ENCODE measurements at regions of chr19 and their contacts with region 1.

Region 1: DNA sequence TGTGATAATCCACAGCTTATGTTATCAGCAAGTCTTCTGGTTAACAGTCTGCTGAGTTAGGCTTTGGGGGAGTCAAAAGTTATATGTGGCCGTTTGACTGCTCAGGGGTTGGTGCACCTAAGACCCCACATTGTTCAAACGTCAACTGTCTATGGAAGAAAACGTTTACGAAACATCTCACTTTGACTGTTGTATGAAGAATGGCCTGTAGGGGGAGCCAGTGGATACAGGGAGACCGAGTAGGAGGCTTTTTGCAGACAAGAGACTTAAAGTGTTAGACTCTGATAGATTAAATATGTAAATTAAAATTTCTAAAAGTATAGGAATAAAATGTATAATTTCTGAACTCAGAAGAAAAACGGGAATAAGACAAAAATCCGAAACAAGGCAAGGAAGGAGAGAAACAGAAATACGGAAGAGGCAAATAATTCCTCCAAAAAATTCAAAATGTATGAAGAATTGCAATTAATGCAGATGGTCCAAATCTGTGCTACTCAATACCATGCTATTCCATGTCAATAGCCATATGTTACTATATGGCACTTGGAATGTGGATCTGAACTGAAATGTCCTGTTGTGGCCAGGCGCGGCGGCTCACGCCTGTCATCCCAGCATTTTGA is 37.8 kb downstream of the TNFSF14 start:
- DNase-seq: peak; percentile 76
- H3K4me3 ChIP-seq: no peak overlapping the region
- H3K27ac ChIP-seq: no peak overlapping the region
- H3K4me1 ChIP-seq: no peaks in the 10 kb centered on the region
- H3K27me3 ChIP-seq: no peaks in the 10 kb centered on the region
- CTCF ChIP-seq: peak; percentile 55 to 82 (median 80)
- POLR2A ChIP-seq: no peak

Region 2: DNA sequence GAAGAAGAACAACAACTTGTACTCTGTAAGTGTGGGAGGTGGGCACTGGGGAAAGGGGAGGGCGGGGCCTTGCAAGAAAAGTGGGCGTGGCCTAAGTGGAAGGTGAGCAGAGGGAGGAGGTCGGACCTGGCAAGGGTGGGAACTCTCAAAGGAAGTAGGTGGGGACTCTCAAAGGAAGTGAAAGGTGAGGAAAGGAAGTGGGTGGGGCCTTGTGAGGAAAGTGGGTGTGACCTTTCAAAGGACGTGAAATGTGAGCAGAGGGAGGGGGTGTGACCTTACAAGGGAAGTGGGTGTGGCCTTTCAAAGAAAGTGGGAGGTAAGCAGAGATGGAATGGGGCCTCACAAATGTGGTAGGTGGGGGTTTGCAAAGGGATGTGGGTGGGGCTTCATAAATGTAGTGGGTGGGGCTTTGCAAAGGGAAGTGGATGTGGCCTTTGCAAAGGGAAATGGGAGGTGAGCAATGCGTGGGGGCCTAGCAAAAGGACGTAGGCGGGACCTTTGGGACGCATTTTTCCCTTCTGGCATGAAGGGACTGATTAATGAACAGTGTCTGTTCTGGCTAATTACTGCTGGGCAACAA is 470.8 kb before region 1 on chr19:
- intact Hi-C with region 1: no loop called
- DNase-seq: no peak
- H3K4me3 ChIP-seq: no peak overlapping the region
- H3K27ac ChIP-seq: no peak overlapping the region
- H3K4me1 ChIP-seq: no peaks in the 10 kb centered on the region
- H3K27me3 ChIP-seq: no peaks in the 10 kb centered on the region
- CTCF ChIP-seq: no peak
- POLR2A ChIP-seq: no peak

Region 3: GRCh38 chr19:6516659-6517291 is 115.3 kb before region 1 on chr19:
- intact Hi-C with region 1: loop called (anchors 5 kb)
- DNase-seq: peak; percentile 85
- H3K4me3 ChIP-seq: peak overlapping the region; percentile 42 to 56
- H3K27ac ChIP-seq: peak overlapping the region; percentile 79 to 82
- H3K4me1 ChIP-seq: no peaks in the 10 kb centered on the region
- H3K27me3 ChIP-seq: no peaks in the 10 kb centered on the region
- CTCF ChIP-seq: peak; percentile 87 to 95 (median 88)
- POLR2A ChIP-seq: no peak

Region 4: GRCh38 chr19:6577476-6578125 is 54.5 kb before region 1 on chr19:
- intact Hi-C with region 1: no loop called
- DNase-seq: no peak
- H3K4me3 ChIP-seq: no peak overlapping the region
- H3K27ac ChIP-seq: no peak overlapping the region
- H3K4me1 ChIP-seq: no peaks in the 10 kb centered on the region
- H3K27me3 ChIP-seq: no peaks in the 10 kb centered on the region
- CTCF ChIP-seq: no peak
- POLR2A ChIP-seq: no peak

Region 5: DNA sequence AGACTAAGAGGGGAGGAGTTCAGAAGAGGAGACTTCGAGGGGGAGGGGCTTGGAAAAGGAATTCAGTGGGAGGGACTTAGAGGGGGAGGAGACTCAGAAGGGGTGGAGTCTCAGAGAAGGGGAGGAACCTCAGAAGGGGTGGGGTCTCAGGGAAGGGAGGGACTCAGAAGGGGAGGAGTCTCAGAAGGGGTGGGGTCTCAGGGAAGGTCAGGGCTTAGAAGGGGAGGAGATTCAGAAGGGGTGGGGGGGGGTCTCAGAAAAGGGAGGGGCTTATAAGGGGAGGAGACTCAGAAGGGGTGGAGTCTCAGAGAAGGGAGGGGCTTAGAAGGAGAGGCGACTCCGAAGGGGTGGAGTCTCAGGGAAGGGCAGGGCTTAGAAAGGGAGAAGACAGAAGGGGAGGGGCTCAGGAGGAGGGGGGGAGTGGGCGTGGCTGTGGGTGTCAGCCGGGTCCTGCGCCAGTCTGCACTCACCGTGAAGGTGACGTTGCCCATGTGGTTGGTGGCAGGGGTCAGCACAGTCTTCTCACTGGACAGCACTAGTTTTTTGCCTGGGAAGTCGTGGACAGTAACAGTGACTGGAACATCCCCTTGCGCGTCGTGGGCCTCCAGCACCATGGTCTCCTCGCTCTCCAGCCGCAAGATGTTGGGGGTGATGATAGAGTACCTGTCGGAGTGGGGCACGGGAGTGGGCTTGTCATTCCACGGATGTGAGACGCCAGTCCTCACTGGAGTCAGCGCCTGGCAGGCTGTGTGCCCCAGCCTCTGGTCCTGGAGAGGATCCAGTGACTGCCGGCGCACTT is 86.8 kb after region 1 on chr19:
- intact Hi-C with region 1: no loop called
- DNase-seq: no peak
- H3K4me3 ChIP-seq: no peak overlapping the region
- H3K27ac ChIP-seq: no peak overlapping the region
- H3K4me1 ChIP-seq: no peaks in the 10 kb centered on the region
- H3K27me3 ChIP-seq: no peaks in the 10 kb centered on the region
- CTCF ChIP-seq: no peak
- POLR2A ChIP-seq: no peak

Region 6: DNA sequence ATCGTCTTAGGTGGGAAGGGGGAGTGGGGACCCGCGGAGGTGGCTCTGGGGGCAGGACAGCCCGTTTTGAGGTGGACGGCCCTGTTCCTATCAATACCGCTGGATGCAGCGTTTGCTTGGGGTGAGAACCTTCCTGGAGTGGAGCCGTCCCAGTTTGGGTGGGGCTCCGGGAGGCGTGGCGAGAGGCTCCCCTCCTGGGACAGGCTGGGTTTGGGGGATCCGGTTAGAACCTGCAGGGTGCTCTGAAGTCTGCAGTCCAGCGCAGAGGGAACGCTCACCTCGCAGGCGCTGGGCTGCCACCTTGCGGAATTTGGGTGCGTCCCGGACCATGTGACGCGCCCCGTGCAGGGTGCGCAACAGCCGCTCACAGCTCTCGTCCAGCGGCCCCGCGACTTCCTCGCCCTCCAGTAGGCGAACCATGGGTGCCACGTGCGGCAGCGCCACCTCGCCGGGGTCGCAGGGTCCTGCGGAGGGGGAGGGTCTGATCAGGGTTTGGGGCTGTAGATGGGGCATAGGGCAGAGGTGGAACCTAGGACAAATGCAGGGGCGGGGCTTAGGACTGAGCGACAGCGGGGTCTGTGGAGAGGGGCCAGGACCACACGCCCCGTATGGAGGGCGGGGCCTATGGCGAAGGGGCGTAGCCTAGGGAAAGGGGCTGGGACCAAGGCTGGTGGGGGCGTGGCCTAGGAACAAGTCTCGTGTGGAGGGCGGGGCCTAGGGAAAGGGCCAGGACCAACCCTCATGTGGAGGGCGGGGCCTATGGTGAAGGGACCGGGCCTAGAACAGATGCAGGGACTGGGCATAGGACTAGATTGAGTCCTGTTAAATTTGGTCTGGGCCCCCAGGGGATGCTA is 121.3 kb after region 1 on chr19:
- intact Hi-C with region 1: loop called (anchors 10 kb)
- DNase-seq: no peak
- H3K4me3 ChIP-seq: peak overlapping the region; percentile 3 to 18
- H3K27ac ChIP-seq: no peak overlapping the region
- H3K4me1 ChIP-seq: no peaks in the 10 kb centered on the region
- H3K27me3 ChIP-seq: no peaks in the 10 kb centered on the region
- CTCF ChIP-seq: peak in 2 of 4 experiments; percentile 35 to 55
- POLR2A ChIP-seq: no peak

Region 7: DNA sequence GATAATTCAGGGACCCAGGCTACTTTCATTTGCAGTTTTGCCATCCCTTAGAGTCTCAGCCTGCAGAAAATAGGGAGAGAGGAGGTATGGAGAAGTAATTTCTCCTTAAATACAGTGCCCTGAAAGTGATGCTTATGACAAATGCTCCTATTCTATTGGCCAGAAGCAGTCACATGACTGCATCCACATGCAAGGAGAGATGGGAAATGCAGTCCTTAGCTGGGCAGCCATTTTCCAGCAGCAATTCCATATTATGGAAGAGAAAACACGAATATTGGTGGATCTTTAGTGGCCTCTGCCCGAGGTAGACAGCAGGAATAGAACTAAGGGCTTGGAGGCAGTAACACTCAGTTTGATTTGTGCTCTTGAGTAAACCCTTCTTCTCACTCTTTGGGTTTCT is 179.8 kb after region 1 on chr19:
- intact Hi-C with region 1: no loop called
- DNase-seq: no peak
- H3K4me3 ChIP-seq: no peak overlapping the region
- H3K27ac ChIP-seq: no peak overlapping the region
- H3K4me1 ChIP-seq: no peaks in the 10 kb centered on the region
- H3K27me3 ChIP-seq: no peaks in the 10 kb centered on the region
- CTCF ChIP-seq: no peak
- POLR2A ChIP-seq: no peak